Activated CD4-positive, alpha-beta T cell treated with anti-CD3 and anti-CD28 coated beads, Interleukin-2, amount 10 ng/mL, durations not matched to agents 7 days and 5 days (primary cell): ENCODE measurements at regions of chr5 and their contacts with region 1.

Region 1: GRCh38 chr5:139341650-139342422 is at the start of gene PAIP2:
- DNase-seq: peak; percentile 98
- H3K4me3 Mint-ChIP-seq: peak within 1 kb of the TSS; percentile 93
- H3K27ac Mint-ChIP-seq: peak within 1 kb of the TSS; percentile 99
- H3K4me1 Mint-ChIP-seq: peaks cover 38% of the 10 kb centered on the region
- H3K27me3 Mint-ChIP-seq: no peaks in the 10 kb centered on the region
- total RNA-seq, gene PAIP2: 87.0 to 96.0 TPM

Region 2: DNA sequence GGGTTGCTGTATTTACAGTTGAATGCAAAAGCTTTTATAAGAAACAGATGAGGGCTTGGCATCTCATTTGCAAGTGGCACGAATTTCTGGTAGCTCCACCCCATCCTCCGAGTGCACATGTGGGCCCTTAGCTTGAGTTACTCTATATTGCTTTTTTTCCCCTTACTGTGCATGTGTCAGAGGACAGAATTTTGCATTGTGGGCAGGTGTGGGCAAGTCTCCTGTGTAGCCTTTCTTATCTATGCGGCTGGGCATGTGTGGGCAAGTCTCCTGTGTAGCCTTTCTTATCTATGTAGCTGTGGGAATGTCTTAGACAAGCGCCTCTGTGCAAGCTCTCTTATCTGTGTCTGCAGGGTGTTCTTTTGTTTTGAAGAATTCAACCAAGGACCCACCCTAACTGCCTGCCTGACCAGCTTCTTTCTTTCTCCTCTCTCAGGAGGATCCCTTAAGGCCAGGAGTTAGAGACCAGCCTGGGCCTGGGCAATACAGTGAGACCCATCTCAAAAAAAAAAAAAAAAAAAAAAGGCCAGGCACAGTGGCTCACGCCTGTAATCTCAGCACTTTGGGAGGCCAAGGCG is 109.6 kb before region 1 on chr5:
- CTCF ChIA-PET with region 1: no interaction called
- POLR2A ChIA-PET with region 1: no interaction called
- DNase-seq: no peak
- H3K4me3 Mint-ChIP-seq: no peak overlapping the region
- H3K27ac Mint-ChIP-seq: no peak overlapping the region
- H3K4me1 Mint-ChIP-seq: peaks cover 2% of the 10 kb centered on the region
- H3K27me3 Mint-ChIP-seq: peaks cover 3% of the 10 kb centered on the region

Region 3: GRCh38 chr5:139306197-139306596 is 35.6 kb before region 1 on chr5:
- CTCF ChIA-PET with region 1: interaction called, 28 read pairs
- POLR2A ChIA-PET with region 1: interaction called, 6 read pairs
- DNase-seq: no peak
- H3K4me3 Mint-ChIP-seq: no peak overlapping the region
- H3K27ac Mint-ChIP-seq: peak overlapping the region; percentile 10
- H3K4me1 Mint-ChIP-seq: peaks cover 78% of the 10 kb centered on the region
- H3K27me3 Mint-ChIP-seq: no peaks in the 10 kb centered on the region

Region 4: GRCh38 chr5:139358064-139358463 is 16.2 kb after region 1 on chr5:
- CTCF ChIA-PET with region 1: interaction called, 19 read pairs
- POLR2A ChIA-PET with region 1: interaction called, 4 read pairs
- DNase-seq: no peak
- H3K4me3 Mint-ChIP-seq: no peak overlapping the region
- H3K27ac Mint-ChIP-seq: no peak overlapping the region
- H3K4me1 Mint-ChIP-seq: peaks cover 13% of the 10 kb centered on the region
- H3K27me3 Mint-ChIP-seq: no peaks in the 10 kb centered on the region

Region 5: GRCh38 chr5:139414581-139415130 is 72.8 kb after region 1 on chr5:
- CTCF ChIA-PET with region 1: no interaction called
- POLR2A ChIA-PET with region 1: no interaction called
- DNase-seq: no peak
- H3K4me3 Mint-ChIP-seq: peak overlapping the region; percentile 2
- H3K27ac Mint-ChIP-seq: peak overlapping the region; percentile 76
- H3K4me1 Mint-ChIP-seq: peaks cover 57% of the 10 kb centered on the region
- H3K27me3 Mint-ChIP-seq: no peaks in the 10 kb centered on the region